ENCODE measurements at regions of chr5 and their contacts with region 1.

Region 1: GRCh38 chr5:154189819-154190594 is 526 bp upstream of the GALNT10 start:
- DNase-seq: peak; percentile 91
- CTCF ChIP-seq: peak; percentile 70

Region 2: DNA sequence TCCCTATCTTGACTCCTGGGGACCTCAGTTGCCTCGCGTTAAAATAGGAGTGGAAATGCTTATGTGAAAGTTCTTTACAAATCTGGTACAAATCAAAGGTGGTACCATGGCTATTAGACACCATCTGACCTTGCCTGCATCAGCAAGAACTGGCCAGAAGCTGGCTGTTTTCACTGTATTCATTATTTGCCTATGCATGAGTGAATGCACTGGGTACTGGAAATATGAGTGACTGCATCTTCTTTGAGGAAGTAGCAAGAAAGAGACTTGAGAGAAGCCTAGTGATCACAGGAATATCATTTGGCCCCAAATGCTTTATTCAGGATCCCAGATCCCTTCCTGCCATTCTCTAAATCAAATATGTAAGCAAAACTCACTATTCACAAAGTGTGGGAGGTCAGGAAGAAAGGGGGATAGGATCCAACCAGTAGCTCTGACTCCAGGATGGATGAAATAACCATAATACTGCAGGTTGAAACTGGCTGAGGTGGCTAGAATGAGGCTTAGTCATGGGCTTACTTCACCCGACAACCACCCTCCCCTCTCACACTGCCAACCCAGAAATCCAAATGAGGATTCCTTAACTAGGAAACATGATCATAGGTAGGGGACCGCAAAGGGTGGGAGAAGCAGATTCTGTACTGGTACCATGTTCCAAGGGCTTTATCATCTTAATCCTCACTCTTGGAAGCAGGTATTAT is 208.0 kb before region 1 on chr5:
- in situ Hi-C with region 1: loop called (anchors 10 kb)
- DNase-seq: no peak
- CTCF ChIP-seq: no peak

Region 3: DNA sequence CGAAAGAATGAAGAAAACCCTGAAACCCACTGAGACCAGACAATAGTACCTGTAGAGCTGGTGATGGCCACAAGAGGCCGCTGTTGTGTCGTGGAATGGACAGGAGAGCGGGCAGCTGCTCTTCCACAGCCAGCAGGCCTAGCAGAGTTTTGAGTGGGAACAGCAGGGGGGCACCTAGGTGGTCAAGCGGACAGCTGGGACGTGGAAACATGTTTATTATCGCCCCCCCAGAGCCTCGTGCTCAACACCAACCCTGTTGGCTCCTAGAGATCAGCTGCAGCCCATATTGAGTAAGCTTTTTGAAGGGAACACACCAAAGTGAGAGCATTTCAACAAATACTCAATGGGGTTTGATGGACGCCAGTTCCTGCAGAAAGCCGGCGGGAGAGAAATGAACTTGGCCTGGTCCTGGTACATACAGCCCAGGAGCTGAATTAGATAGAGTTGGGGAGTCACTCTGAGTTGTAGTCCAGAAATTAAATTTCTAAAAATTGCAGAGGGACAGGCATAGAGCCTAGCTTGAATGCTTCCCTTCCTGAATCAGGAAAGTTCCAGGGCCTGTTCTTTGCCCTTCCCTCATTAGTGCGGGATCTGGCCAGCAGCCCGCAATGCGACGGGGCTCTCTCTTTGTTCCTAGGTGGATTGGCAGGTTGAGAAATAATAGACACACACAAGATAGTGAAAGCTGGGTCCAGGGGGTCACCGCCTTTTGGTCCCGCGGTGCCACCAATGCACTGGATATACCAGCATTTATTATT is 117.4 kb before region 1 on chr5:
- in situ Hi-C with region 1: loop called (anchors 10 kb)
- DNase-seq: peak; percentile 77
- CTCF ChIP-seq: peak; percentile 84

Region 4: DNA sequence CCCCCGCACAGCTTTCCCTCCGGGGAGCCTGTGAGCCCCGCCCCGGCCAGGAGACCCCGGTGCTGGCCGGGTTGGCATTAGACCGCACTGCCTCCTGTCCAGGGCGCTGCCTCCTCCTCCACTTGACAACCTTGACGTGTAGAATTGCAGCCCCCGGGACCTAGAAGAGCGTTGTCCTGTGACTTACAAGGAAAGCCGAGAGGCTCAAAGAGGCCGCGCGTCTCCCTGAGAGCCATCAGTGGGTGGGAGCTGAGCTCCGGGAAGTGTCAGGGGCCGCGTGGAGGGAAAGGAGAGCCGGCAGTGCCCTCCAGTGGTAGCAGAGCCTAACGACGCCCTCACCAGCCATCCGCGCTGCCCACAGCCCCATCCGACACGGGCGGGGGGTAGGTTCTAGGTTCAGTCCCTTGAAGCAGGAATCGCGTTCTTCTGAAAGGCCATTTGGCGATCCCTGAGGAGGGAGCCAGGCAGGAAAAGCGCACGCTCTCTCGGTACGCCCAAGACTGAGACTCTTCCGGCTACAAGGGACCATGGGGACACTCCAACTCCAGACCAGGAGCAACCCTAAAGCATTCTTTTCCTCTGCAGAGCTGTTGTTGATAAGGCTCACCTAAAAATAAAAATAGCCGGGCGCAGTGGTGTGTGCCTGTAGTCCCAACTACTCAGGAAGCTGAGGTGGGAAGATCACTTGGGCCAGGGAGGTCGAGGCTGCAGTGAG is 215.2 kb after region 1 on chr5:
- in situ Hi-C with region 1: loop called (anchors 5 kb)
- DNase-seq: peak; percentile 93
- CTCF ChIP-seq: peak; percentile 77